HEK293 (cell line): ENCODE measurements at regions of chr10 and their contacts with region 1.

Region 1: DNA sequence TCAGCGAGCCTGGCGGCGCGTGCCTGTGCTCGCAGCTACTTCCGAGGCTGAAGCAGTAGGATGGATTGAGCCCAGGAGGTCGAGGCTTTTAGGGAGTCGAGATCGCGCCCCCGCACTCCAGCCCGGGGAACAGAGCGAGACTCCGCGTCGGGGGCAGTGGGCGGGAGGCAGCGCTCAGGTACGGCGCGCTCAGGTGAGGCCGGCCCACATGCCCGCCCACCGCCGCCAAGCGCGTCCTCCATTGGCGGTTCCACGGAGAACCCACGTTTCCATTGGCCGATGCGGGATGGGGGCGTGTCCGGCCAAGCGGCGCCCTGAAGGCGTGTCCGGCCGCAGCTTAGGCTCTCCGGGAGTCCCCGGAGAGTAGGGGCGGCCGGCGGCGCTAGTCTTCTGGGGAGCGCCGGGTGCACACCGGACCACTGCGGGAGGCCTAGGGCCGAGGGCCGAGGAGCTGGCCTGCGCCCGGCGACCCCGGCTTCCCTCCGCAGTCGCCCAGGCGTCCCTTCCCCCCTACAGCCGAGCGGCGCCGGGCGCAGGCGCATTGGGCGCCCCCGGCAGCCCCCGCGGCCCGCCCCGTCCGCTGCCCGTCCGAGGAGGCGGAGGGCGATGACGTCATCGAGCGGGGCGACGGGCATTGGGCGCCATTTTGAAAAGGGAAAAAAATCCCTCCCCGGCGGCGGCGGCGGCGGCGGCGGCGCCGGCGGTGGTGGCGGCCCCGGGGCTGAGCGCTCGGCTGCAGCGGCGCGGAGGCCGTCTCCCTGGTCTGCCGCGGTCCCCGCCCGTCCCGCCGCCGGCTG is at the start of gene PPP2R2D:
- H3K4me3 ChIP-seq: peak within 1 kb of the TSS; percentile 76
- H3K27ac ChIP-seq: peak within 1 kb of the TSS; percentile 83
- H3K4me1 ChIP-seq: peaks cover 19% of the 10 kb centered on the region
- CTCF ChIP-seq: no peak

Region 2: DNA sequence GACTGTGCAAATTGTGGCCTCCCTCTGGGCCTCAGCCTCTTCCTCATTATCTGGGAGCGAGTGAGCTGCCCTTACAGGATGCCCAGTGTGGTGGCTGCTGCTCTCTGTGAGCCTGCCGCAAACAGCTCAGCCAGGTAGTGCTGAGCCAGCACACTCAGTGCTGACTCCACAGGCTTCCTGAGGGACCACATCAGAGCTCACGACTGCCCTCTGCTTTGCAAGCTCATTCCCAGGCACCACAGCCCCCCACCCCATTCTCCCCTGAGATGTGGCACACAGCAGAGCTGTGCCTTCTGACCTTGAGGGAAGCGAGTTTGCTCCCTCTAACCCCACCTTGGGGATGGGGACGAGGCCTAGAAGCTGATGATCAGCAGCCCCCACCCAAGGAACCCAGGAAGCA is 230.2 kb before region 1 on chr10:
- CTCF ChIA-PET with region 1: no interaction called
- POLR2A ChIA-PET with region 1: no interaction called
- H3K4me3 ChIP-seq: no peak overlapping the region
- H3K27ac ChIP-seq: no peak overlapping the region
- H3K4me1 ChIP-seq: no peaks in the 10 kb centered on the region
- CTCF ChIP-seq: no peak

Region 3: GRCh38 chr10:131774681-131775085 is 125.9 kb before region 1 on chr10:
- CTCF ChIA-PET with region 1: no interaction called
- POLR2A ChIA-PET with region 1: no interaction called
- H3K4me3 ChIP-seq: no peak overlapping the region
- H3K27ac ChIP-seq: no peak overlapping the region
- H3K4me1 ChIP-seq: no peaks in the 10 kb centered on the region
- CTCF ChIP-seq: no peak

Region 4: DNA sequence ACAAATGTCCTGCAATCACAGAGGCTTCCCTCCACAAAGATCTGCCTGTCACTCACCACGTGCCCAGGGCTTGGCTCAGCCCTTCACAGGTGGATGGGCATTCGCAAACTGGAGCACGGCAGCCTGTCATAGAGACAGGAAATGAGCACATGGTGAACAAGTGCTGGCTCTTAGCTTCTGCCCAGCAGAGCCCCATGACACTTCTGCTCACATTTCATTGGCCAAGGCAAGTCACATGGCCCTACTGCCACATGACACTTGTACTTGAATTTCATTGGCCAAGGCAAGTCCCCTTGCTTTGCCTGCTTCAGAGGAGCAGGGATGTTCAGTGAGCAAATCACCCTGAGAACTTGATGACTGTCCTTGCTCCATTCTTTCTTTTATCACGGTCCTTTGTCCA is 110.5 kb before region 1 on chr10:
- CTCF ChIA-PET with region 1: no interaction called
- POLR2A ChIA-PET with region 1: no interaction called
- H3K4me3 ChIP-seq: no peak overlapping the region
- H3K27ac ChIP-seq: no peak overlapping the region
- H3K4me1 ChIP-seq: no peaks in the 10 kb centered on the region
- CTCF ChIP-seq: no peak

Region 5: GRCh38 chr10:131885391-131886161 is 15.0 kb before region 1 on chr10:
- CTCF ChIA-PET with region 1: interaction called, 16 read pairs
- POLR2A ChIA-PET with region 1: interaction called, 4 read pairs
- H3K4me3 ChIP-seq: no peak overlapping the region
- H3K27ac ChIP-seq: no peak overlapping the region
- H3K4me1 ChIP-seq: no peaks in the 10 kb centered on the region
- CTCF ChIP-seq: peak; percentile 96

Region 6: GRCh38 chr10:131943021-131943814 is 42.7 kb after region 1 on chr10:
- CTCF ChIA-PET with region 1: interaction called, 10 read pairs
- POLR2A ChIA-PET with region 1: no interaction called
- H3K4me3 ChIP-seq: no peak overlapping the region
- H3K27ac ChIP-seq: no peak overlapping the region
- H3K4me1 ChIP-seq: no peaks in the 10 kb centered on the region
- CTCF ChIP-seq: no peak